CD4-positive, alpha-beta memory T cell (primary cell): ENCODE measurements at regions of chr17 and their contacts with region 1.

Region 1: DNA sequence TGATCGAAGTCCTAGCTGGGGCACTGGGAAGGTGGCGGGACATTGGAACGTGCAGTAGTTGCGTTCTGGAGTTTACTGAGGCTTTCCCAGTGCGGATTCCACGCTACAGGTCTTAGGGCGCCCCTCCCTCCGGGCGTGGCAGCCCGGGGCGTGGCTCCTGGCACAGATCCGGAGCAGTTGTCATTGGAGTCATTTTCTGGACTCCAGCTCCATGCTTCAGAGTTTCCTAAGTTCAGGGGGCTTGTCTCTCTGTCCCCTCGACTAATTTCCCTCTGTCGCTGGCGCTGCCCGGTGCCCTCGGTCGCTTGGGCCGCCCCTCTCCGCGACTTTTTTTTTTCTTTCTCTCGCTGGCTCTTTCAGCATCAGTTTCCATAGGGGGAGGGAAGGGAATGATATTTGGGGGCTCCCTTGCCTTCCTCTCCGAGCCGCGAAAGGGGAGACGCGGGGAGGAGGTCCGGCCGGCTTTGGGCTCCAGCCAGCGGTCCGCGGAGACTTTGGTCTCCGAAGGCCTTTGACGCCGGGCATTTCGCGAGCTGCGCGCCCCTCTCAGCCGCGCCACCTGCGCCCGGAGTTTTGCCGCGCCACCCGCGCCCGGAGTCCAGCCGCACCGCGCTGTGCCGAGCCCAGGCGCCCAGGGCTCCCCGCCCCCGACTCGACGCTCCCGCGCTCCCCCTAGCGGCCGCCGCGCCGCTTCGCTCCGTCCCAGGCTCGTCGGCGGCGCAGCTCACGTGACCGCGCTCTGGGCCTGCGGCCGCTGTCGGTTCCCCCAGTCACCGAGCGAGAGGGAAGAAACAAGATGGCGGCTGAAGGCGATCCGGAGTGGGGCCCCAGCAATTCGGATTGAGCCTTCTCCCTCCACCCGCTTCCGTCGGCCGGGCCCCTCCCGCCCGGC is at the start of gene BPTF:
- DNase-seq: peak; percentile 89 to 90 (median 90)
- H3K4me3 ChIP-seq: peak within 1 kb of the TSS; percentile 52 to 75
- H3K4me3 Mint-ChIP-seq: peak within 1 kb of the TSS; percentile 91 to 100 (median 95)
- H3K27ac ChIP-seq: peak within 1 kb of the TSS; percentile 46
- H3K27ac Mint-ChIP-seq: peak within 1 kb of the TSS; percentile 96 to 99 (median 98)
- H3K4me1 ChIP-seq: peaks cover 38% of the 10 kb centered on the region
- H3K4me1 Mint-ChIP-seq: peaks cover 18 to 45% (median 30%) of the 10 kb centered on the region in 4 donors
- H3K27me3 ChIP-seq: no peaks in the 10 kb centered on the region
- H3K27me3 Mint-ChIP-seq: peaks cover 0 to 3% of the 10 kb centered on the region in 2 donors
- total RNA-seq, gene BPTF: 182 to 187 TPM

Region 2: GRCh38 chr17:67717624-67718329 is 107.2 kb before region 1 on chr17 and contains the start of gene NOL11:
- CTCF ChIA-PET with region 1: interaction called, 5 read pairs
- POLR2A ChIA-PET with region 1: interaction called, 12 read pairs
- intact Hi-C with region 1: loop called (anchors 1 kb)
- DNase-seq: peak; percentile 99 to 100 (median 99)
- H3K4me3 ChIP-seq: peak within 1 kb of the TSS; percentile 89 to 100
- H3K4me3 Mint-ChIP-seq: peak within 1 kb of the TSS; percentile 98 to 100 (median 100)
- H3K27ac ChIP-seq: peak within 1 kb of the TSS; percentile 94
- H3K27ac Mint-ChIP-seq: peak within 1 kb of the TSS; percentile 97 to 100 (median 99)
- H3K4me1 ChIP-seq: peaks cover 28% of the 10 kb centered on the region
- H3K4me1 Mint-ChIP-seq: peaks cover 10 to 33% (median 19%) of the 10 kb centered on the region in 4 donors
- H3K27me3 ChIP-seq: no peaks in the 10 kb centered on the region
- H3K27me3 Mint-ChIP-seq: peaks cover 0 to 2% of the 10 kb centered on the region in 2 donors
- total RNA-seq, gene NOL11: 56.6 to 57.1 TPM

Region 3: DNA sequence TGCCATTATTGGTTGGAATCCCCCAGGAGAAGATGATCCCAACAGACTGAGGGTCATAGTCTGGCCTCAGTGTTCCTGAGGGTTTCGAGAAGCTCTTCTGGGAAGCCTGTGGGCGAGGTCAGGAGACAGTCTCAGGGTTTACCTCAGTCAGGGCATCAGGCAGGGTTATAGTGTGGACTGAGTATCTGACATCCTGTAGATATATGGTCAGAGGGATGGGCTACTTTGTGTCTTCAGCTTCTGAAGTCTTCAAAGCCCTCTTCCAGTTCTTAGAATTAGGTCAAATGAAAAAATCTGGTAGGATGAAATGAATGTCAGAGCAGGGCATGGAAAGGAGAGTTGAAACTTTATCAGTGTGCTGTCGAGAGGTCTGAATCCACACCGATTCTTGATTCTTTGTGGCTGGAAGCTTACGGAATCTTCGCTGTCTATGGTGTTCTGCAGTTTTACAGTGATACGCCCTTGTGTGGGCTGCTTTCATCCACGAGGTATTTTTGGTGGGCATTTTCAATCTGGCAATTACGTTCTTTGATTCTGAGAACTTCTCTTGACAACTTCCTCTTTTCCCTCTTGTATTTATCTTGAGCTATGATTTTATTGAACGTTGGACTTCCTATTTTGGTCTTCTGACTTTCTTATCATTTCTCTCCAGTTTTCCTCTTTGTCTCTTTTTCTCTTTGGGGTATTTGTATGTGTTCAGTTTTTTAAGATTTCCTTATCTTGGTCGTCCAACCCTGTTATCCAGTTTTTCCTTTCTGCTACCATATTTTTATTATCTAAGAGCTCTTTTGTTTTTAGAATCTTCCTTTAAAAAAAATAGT is 30.7 kb after region 1 on chr17:
- CTCF ChIA-PET with region 1: no interaction called
- POLR2A ChIA-PET with region 1: interaction called, 7 read pairs
- intact Hi-C with region 1: loop called (anchors 2 kb)
- DNase-seq: no peak
- H3K4me3 ChIP-seq: no peak overlapping the region
- H3K4me3 Mint-ChIP-seq: peak overlapping the region; percentile 33 to 80 (median 72)
- H3K27ac ChIP-seq: no peak overlapping the region
- H3K27ac Mint-ChIP-seq: peak overlapping the region; percentile 43 to 86 (median 65)
- H3K4me1 ChIP-seq: peaks cover 67% of the 10 kb centered on the region
- H3K4me1 Mint-ChIP-seq: peaks cover 52 to 85% (median 69%) of the 10 kb centered on the region in 4 donors
- H3K27me3 ChIP-seq: no peaks in the 10 kb centered on the region
- H3K27me3 Mint-ChIP-seq: no peaks in the 10 kb centered on the region